MCF 10A (cell line): ENCODE measurements at regions of chr18 and their contacts with region 1.

Region 1: GRCh38 chr18:23377669-23378301 is 75.3 kb upstream of the RIOK3 start:
- DNase-seq: peak; percentile 77
- H3K4me3 Mint-ChIP-seq: peak overlapping the region; percentile 46
- H3K27ac Mint-ChIP-seq: peak overlapping the region; percentile 84
- H3K4me1 Mint-ChIP-seq: peaks cover 24% of the 10 kb centered on the region
- H3K27me3 Mint-ChIP-seq: no peaks in the 10 kb centered on the region
- CTCF ChIP-seq: no peak

Region 2: DNA sequence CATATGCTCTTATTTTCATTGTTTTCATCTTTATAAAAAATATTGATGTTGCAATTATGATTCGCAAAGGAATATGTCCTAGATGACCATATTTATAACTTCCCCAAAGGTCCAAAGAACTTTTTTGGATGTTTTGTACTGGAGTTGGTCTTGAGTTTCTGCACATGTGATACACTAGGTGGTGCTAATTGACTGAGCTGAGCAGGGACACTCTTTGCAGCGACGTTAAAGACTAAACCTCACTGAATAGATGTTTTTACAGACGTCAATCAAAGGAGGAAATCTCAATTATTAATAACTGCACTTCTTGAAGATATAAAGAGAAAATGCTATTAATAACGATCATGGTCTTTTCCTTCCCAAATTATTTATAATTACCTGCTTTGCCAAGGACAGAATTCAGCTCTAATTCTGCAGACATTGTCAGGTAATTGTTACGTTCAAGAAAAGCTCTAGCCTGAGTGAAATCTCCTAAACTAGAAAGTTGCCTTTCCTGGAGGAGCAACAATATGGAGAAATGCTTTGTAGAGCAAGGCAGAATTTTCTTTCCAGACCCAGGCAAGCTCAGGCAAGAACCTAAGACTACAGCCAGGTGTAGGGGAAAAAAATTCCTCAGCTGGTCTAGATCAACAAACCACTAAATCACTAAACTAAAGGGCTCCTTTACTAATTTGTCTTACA is 564.0 kb before region 1 on chr18:
- CTCF ChIA-PET with region 1: no interaction called
- POLR2A ChIA-PET with region 1: no interaction called
- intact Hi-C with region 1: loop called (anchors 10 kb)
- DNase-seq: peak; percentile 73
- H3K4me3 Mint-ChIP-seq: no peak overlapping the region
- H3K27ac Mint-ChIP-seq: peak overlapping the region; percentile 73
- H3K4me1 Mint-ChIP-seq: peaks cover 21% of the 10 kb centered on the region
- H3K27me3 Mint-ChIP-seq: no peaks in the 10 kb centered on the region
- CTCF ChIP-seq: peak; percentile 71

Region 3: GRCh38 chr18:23077493-23078256 is 300.1 kb before region 1 on chr18:
- CTCF ChIA-PET with region 1: interaction called, 3 read pairs
- POLR2A ChIA-PET with region 1: interaction called, 3 read pairs
- intact Hi-C with region 1: loop called (anchors 1 kb)
- DNase-seq: peak; percentile 43
- H3K4me3 Mint-ChIP-seq: no peak overlapping the region
- H3K27ac Mint-ChIP-seq: no peak overlapping the region
- H3K4me1 Mint-ChIP-seq: no peaks in the 10 kb centered on the region
- H3K27me3 Mint-ChIP-seq: no peaks in the 10 kb centered on the region
- CTCF ChIP-seq: peak; percentile 34

Region 4: GRCh38 chr18:23237524-23238151 is 140.1 kb before region 1 on chr18:
- CTCF ChIA-PET with region 1: interaction called, 3 read pairs
- POLR2A ChIA-PET with region 1: interaction called, 9 read pairs
- intact Hi-C with region 1: loop called (anchors 5 kb)
- DNase-seq: no peak
- H3K4me3 Mint-ChIP-seq: peak overlapping the region; percentile 24
- H3K27ac Mint-ChIP-seq: no peak overlapping the region
- H3K4me1 Mint-ChIP-seq: peaks cover 11% of the 10 kb centered on the region
- H3K27me3 Mint-ChIP-seq: no peaks in the 10 kb centered on the region
- CTCF ChIP-seq: no peak

Region 5: GRCh38 chr18:23259701-23260582 is 117.8 kb before region 1 on chr18:
- CTCF ChIA-PET with region 1: interaction called, 10 read pairs
- POLR2A ChIA-PET with region 1: no interaction called
- intact Hi-C with region 1: no loop called
- DNase-seq: peak; percentile 66
- H3K4me3 Mint-ChIP-seq: peak overlapping the region; percentile 62
- H3K27ac Mint-ChIP-seq: peak overlapping the region; percentile 84
- H3K4me1 Mint-ChIP-seq: peaks cover 21% of the 10 kb centered on the region
- H3K27me3 Mint-ChIP-seq: no peaks in the 10 kb centered on the region
- CTCF ChIP-seq: no peak

Region 6: GRCh38 chr18:23416298-23416697 is 38.5 kb after region 1 on chr18:
- CTCF ChIA-PET with region 1: interaction called, 14 read pairs
- POLR2A ChIA-PET with region 1: interaction called, 5 read pairs
- intact Hi-C with region 1: no loop called
- DNase-seq: no peak
- H3K4me3 Mint-ChIP-seq: no peak overlapping the region
- H3K27ac Mint-ChIP-seq: no peak overlapping the region
- H3K4me1 Mint-ChIP-seq: no peaks in the 10 kb centered on the region
- H3K27me3 Mint-ChIP-seq: no peaks in the 10 kb centered on the region
- CTCF ChIP-seq: no peak

Region 7: DNA sequence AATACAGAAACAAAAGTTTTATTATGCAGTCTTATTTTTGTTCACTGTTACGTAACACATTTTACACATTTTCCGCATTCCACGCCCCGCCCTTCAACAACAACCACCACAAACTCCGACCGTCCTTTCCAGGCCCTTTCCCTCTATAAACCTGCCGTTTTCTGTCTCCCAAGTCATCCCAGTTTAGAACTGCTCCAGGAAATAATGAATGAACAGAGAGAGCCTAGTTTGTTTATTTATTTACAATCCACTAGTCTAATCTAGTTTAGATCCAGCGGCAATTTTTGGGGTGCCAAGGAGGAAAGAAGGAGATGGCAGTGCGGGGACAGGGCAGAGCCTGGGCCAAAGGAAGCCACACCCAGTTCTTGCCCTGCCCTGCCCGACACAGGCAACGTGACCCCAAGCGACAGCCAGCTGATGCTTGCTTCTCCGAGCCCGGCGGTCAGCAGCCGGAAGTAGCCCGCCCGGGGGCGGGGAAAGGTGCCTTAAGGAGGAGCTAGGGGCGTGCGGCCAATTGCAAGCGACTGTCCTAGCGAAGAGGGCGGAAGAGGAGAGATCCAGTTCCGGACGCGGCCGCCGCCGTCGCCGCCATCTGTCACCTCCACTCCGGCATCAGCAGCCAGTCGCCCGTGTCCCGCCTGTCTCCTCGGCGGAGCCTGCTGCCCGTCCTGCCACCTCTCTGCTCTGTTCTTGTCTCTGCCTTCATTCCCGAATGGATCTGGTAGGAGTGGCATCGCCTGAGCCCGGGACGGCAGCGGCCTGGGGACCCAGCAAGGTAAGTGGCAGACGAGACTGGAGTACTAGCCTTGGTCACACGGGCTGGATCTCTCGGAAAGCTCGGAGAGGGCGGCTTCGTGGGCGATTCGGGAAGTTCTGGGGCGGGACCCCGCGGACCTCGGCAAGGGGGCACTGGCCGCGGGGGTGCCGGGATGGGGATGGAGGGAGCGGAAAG is 75.2 kb after region 1 on chr18 and contains the start of gene RIOK3:
- CTCF ChIA-PET with region 1: interaction called, 3 read pairs
- POLR2A ChIA-PET with region 1: interaction called, 18 read pairs
- intact Hi-C with region 1: no loop called
- DNase-seq: peak; percentile 97
- H3K4me3 Mint-ChIP-seq: peak within 1 kb of the TSS; percentile 99
- H3K27ac Mint-ChIP-seq: peak within 1 kb of the TSS; percentile 98
- H3K4me1 Mint-ChIP-seq: peaks cover 30% of the 10 kb centered on the region
- H3K27me3 Mint-ChIP-seq: no peaks in the 10 kb centered on the region
- CTCF ChIP-seq: no peak
- total RNA-seq, gene RIOK3: 96.7 and 97.1 TPM in 2 replicates